ENCODE measurements at regions of chr14 and their contacts with region 1.

Region 1: GRCh38 chr14:100645192-100645990 is 58.2 kb upstream of the BEGAIN start:
- DNase-seq: peak; percentile 93

Region 2: GRCh38 chr14:100392356-100392755 is 253.0 kb before region 1 on chr14:
- intact Hi-C with region 1: loop called in 1 of 2 experiments (anchors 10 kb)
- DNase-seq: no peak

Region 3: DNA sequence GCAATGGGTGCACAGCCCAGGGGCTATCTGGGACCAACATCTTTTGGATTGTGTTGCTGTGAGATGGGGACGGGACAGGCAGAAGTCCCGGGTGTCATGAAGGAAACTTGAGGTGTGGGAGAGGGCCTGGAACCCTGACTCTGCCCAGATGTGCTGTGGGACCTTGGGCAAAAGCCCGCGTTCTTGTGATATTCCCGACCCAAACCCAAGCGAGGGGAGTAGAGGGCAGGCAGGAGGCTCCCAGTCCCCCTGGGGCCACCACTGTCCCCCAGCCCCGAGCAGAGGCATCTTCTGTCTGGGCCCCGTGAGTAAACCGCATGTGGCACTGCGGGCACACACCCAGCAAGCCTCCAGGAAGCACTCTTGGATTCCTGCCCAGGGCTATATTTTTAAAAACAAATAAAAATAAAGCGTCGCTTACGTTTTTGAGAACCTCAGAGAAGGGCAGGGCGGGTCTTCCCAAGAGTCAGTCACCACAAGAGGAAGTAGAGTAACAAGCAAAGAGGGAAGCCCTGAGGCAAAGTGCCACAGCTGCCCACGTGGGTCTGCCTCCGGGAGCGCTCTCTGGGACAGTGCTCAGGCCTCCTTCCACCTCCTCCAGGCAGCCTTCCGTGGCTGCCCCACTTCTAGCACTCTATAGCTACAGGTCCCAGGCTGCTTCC is 97.6 kb before region 1 on chr14:
- intact Hi-C with region 1: no loop called
- DNase-seq: no peak

Region 4: DNA sequence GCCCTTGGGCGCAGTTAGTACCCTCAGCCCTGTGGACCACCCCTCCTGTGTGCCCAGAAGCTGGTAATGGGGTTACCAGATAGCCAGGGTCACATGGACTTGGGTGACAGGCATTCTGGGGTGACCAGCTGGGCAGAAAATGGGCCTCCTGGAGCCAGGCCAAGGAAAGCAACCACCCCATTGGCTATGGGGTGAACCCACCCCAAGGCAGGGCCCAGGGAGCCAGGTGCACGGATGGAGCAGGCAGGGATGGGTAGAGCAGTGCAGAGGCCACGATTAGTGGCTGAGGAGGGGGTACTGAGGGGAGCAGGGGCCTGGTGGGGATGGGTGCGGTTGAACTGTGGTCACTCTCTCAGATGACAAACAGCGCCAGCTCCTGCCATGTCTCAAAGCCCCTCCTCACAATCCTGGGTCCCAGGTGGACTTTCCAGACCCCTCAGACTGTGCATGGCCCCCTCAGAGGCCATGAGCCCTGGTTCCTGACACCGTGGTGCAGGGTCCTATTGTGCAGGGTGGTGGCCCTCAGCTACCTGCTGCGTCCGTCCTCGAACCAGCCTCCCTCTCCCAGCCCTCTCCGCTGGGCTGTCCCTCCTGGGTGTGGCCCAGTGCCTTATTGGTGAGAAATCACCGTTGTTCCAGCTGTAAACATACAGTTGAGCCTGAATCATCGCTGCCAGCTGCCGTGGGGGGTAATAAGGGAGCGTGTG is 34.7 kb before region 1 on chr14:
- intact Hi-C with region 1: no loop called
- DNase-seq: peak; percentile 76

Region 5: DNA sequence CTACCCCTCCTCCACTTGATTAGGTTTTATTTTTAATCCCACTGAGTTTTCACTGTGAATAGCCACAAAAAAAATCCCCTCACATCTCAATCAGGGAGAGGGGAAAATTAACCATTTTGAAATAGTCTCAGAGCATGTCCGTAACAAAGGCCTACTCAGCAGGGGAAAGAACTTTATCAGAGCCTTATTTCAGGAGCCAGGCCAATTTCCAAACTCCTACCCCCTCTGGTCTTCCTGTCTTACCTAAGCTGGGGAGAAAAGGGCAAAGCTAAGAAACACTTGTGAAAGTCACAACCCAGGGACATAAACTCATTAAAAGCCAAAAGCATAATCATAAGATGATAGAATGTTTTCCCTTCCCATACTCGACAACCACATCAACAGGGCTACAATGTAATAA is 655.6 kb after region 1 on chr14:
- intact Hi-C with region 1: no loop called
- DNase-seq: no peak